Common myeloid progenitor, CD34-positive (primary cell): ENCODE measurements at regions of chr14 and their contacts with region 1.

Region 1: DNA sequence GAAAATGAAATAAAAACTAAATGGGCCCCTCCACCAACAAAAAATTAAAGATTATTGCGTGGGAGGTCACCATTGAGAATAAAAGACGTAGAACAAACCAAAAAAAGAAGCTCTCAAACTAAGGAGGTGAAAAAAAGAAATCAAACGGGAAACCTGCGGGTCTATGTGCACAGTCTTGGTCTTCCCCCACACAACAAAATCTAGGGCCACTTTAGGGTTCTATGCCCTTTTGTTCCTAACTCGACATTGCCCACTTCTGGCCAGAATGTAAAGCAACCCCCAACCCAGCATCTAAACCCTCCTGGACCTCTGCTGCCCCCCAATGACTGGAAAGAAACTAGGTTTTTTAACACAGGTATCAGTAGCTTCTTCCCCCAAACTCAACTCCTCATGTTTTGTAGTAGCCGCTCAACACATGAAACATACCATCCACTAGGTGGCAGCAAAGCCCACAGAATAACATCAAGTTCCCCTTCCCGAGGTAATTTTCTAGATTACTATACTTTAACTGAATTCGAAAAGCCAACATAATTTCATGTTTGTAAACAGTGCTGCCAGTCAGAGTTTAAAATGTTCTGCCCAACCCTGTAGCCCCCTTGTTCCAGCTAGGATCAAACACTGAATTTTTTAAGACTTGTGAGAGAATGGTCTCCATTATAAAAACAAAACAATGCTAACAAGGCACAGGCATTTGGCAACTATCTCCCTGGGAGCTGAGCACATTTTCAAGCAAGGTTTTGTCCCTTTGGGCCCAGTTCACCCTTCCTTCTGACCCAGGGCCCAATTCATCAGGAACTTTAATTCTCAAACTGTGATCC is 18.7 kb downstream of the DAD1 start:
- DNase-seq: peak; percentile 96 to 99 (median 97)
- H3K4me3 ChIP-seq: peak overlapping the region in 1 of 7 experiments; percentile 28
- H3K27ac ChIP-seq: no peak overlapping the region
- H3K4me1 ChIP-seq: peaks cover 8 to 16% (median 12%) of the 10 kb centered on the region in 4 experiments
- H3K27me3 ChIP-seq: no peaks in the 10 kb centered on the region

Region 2: GRCh38 chr14:22344673-22345072 is 225.7 kb before region 1 on chr14:
- CTCF ChIA-PET with region 1: no interaction called
- POLR2A ChIA-PET with region 1: no interaction called
- DNase-seq: no peak
- H3K4me3 ChIP-seq: no peak overlapping the region
- H3K27ac ChIP-seq: no peak overlapping the region
- H3K4me1 ChIP-seq: no peaks in the 10 kb centered on the region
- H3K27me3 ChIP-seq: no peaks in the 10 kb centered on the region

Region 3: DNA sequence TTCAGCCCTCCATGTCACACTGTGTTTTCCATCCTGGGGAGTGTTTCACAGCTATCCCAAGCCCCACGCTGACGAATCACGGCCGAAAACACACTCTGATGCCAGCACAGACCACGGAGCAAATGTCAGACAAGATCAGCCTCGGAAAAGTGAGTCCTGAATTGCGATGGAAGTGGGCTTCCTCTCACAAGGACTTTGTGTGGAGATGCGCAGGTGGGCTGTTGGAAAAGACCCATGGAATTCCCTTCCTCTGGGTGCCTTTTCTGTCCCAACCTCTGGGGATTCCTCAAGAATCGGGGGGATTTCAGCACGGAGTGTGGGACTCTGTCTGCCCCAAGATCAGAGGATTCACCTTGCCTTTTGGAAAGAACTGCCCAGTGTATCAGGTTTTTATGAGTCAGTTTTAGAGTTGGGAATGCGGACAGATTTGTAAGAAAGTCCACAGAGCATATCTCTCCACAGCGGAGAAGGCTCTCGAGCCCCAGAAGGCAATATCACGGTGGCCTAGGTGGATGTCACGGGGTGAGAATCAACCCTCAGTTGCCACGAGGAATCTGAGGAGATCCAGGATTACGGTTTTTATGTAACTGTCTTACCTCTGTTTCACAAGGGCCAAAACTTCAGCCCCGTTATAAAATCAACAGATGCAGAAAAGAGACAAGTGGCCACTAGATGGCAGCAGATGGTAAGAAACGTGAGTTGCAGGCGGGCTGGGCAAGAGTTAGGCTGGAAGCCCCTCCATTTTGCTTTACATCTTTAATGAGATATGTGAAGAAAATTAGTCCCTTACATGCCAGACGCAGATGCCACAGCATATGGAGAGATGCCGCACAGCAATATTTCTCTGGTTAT is 183.2 kb before region 1 on chr14:
- CTCF ChIA-PET with region 1: interaction called, 49 read pairs
- POLR2A ChIA-PET with region 1: no interaction called
- DNase-seq: peak; percentile 82 to 92 (median 86)
- H3K4me3 ChIP-seq: no peak overlapping the region
- H3K27ac ChIP-seq: no peak overlapping the region
- H3K4me1 ChIP-seq: peaks cover 0 to 2% (median under 1%) of the 10 kb centered on the region in 4 experiments
- H3K27me3 ChIP-seq: peaks cover 0 to 2% (median 0%) of the 10 kb centered on the region in 5 experiments

Region 4: DNA sequence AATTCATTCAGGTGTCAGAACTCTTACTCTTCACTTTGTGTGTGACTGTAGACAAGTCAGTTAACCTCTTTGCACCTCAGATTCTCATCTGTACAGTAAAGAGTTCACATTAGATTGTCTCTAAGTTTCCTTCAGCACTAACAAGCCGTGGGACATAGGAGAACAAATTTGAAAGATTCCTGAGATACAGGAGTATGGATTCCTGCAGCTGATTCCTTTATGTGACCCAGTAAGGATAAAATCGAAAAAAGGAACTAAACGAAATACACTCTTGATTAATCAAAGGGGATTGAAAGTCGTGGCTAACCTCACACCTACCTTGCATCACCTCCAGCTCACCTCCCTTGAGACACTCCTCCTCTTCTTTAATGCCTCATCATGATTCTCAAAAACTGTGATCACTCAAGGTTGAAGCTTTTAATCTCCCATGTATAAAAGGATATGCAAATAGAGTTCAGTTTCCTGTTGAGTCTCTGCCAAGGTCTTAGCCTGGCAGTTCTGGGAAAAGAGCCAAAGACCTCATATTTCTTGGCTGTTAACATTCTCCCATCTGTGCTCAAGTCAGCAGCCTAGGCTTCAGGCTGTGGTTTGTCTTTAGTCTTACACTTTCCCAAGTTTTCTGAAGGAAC is 137.9 kb before region 1 on chr14:
- CTCF ChIA-PET with region 1: no interaction called
- POLR2A ChIA-PET with region 1: no interaction called
- DNase-seq: peak; percentile 88 to 92 (median 91)
- H3K4me3 ChIP-seq: peak overlapping the region in 5 of 7 experiments; percentile 43 to 79 (median 61)
- H3K27ac ChIP-seq: peak overlapping the region in 1 of 2 experiments; percentile 62
- H3K4me1 ChIP-seq: peaks cover 40 to 93% (median 81%) of the 10 kb centered on the region in 4 experiments
- H3K27me3 ChIP-seq: no peaks in the 10 kb centered on the region

Region 5: DNA sequence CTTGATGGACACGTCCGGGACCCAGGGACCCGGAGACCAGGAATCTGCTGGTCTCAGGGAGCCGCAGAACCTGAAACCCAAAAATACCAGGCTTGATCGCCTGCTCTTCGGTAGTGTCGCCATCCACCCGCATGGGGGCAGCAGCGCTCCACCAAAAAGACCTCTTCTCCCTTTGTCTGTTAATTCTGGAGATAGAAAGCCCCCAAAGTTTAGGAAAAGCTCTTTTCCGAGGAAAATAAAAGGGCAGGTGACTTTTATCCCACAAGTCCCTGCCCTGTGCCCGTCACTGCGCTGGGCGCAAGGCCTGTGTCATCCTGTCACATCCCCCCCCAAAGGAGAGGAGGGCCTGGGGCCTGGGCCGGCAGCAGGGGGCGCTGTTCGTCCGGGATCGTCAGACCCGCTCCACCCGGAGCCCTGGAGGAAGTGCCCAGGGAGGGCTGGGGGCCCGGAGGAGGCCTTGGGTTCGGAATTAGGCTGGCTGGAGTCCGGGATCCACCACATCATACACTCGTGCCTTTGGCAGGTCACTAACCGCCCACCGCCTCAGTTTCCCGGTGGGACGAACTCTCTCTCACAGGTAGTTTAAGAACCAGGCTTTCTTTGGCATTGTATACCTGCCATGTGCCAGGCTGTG is 13.2 kb before region 1 on chr14:
- CTCF ChIA-PET with region 1: interaction called, 57 read pairs
- POLR2A ChIA-PET with region 1: interaction called, 5 read pairs
- DNase-seq: peak; percentile 84 to 88 (median 85)
- H3K4me3 ChIP-seq: peak overlapping the region in 6 of 7 experiments; percentile 0 to 76 (median 54)
- H3K27ac ChIP-seq: peak overlapping the region; percentile 61 to 84
- H3K4me1 ChIP-seq: peaks cover 30 to 78% (median 67%) of the 10 kb centered on the region in 4 experiments
- H3K27me3 ChIP-seq: no peaks in the 10 kb centered on the region

Region 6: DNA sequence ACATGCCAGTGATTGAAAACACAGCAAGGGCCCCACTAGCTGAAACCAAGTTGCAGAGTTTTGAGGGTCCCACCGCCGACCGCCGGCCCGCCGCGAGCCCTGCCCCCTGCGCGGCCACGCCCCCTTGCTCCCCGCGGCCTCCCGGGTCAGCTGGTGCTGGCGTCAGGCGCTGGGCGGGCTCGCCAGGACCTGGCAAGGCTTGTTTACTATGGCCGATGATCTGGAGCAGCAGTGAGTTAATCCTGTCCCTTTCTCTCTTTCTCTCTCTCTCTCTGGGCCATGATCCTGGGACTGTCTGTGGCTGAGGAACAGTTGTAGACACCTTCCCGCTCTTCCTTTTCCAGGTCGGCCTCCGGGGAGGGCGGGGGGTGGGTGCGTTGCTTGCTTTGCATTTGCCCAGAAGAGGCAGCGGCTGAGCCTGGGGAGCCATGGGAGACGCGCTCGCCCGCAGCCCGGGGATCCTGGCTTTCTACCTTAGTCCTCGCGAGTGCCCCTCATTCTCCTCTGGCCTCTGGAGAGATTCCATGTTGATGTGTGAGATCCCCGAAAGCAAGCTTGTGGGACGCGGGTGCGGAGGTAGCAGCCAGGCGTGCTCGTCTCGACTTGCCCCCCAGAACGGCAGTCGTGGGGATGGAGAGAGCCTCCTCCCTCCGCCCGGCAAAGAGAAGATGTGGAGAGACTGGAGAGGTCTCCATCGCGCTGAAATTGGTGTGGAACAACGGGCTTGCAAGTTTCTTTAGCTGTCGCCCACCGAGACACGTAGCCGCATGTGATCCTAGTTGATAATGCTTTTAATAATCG is 28.0 kb after region 1 on chr14 and contains the start of gene ABHD4:
- CTCF ChIA-PET with region 1: interaction called, 48 read pairs
- POLR2A ChIA-PET with region 1: no interaction called
- DNase-seq: peak; percentile 56 to 79 (median 71)
- H3K4me3 ChIP-seq: peak within 1 kb of the TSS; percentile 71 to 98 (median 94)
- H3K27ac ChIP-seq: peak within 1 kb of the TSS; percentile 61 to 87
- H3K4me1 ChIP-seq: peaks cover 14 to 47% (median 33%) of the 10 kb centered on the region in 4 experiments
- H3K27me3 ChIP-seq: no peaks in the 10 kb centered on the region

Region 7: DNA sequence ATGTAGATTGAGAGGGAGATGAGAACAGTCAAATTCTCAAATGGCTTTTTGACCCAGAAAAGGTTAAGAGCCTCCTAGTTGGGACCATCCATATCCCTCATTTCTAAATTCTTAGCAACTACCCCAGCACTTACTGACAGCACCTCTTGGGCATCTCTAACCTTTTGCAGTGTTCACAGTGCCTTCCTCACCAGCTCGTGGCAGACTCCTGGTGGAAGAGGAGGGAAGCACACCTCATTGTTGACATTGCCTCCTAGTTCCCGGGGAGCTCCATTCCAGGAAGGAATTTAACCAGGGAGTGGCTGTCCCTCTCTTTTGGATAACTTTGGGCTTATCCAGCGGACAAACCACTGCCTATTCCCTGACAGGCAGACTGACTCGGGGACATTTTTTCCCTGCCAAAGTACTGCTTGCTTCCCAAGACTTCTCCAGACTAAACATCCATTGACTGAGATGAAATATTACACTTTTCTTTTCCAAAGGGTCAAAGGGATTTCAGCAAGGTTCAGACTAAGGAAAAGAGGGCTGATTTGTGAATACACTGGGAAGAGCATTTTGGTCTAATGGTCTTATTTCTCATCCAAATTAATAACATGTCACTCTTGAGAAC is 82.8 kb after region 1 on chr14:
- CTCF ChIA-PET with region 1: interaction called, 65 read pairs
- POLR2A ChIA-PET with region 1: interaction called, 3 read pairs
- DNase-seq: peak; percentile 56 to 76 (median 75)
- H3K4me3 ChIP-seq: no peak overlapping the region
- H3K27ac ChIP-seq: no peak overlapping the region
- H3K4me1 ChIP-seq: peaks cover 0 to 2% (median 0%) of the 10 kb centered on the region in 4 experiments
- H3K27me3 ChIP-seq: peaks cover 0 to 3% (median 0%) of the 10 kb centered on the region in 5 experiments

Region 8: DNA sequence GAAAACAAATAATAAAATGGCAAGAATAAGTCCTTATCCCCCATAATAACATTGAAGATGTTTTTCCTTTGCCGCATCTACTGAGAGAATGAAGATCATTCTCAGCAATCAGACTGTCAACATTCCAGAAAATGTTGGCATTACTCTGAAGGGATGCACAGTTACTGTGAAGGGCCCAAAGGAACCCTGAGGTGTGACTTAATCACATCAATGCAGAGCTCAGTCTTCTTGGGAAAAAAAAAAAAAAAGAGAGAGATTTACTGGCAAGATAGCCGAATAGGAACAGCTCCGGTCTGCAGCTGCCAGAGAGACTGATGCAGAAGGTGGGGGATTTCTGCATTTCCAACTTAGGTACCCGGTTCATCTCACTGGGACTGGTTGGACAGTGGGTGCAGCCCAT is 115.1 kb after region 1 on chr14:
- CTCF ChIA-PET with region 1: no interaction called
- POLR2A ChIA-PET with region 1: no interaction called
- DNase-seq: no peak
- H3K4me3 ChIP-seq: no peak overlapping the region
- H3K27ac ChIP-seq: no peak overlapping the region
- H3K4me1 ChIP-seq: no peaks in the 10 kb centered on the region
- H3K27me3 ChIP-seq: peaks cover 0 to 4% (median 0%) of the 10 kb centered on the region in 5 experiments

Region 9: GRCh38 chr14:22852940-22853767 is 282.8 kb after region 1 on chr14:
- CTCF ChIA-PET with region 1: interaction called, 21 read pairs
- POLR2A ChIA-PET with region 1: no interaction called
- DNase-seq: peak; percentile 84 to 88 (median 87)
- H3K4me3 ChIP-seq: peak overlapping the region in 6 of 7 experiments; percentile 23 to 74 (median 60)
- H3K27ac ChIP-seq: no peak overlapping the region
- H3K4me1 ChIP-seq: peaks cover 0 to 34% (median 29%) of the 10 kb centered on the region in 4 experiments
- H3K27me3 ChIP-seq: peaks cover 2 to 42% (median 5%) of the 10 kb centered on the region in 5 experiments